ENCODE measurements at regions of chr17 and their contacts with region 1.

Region 1: DNA sequence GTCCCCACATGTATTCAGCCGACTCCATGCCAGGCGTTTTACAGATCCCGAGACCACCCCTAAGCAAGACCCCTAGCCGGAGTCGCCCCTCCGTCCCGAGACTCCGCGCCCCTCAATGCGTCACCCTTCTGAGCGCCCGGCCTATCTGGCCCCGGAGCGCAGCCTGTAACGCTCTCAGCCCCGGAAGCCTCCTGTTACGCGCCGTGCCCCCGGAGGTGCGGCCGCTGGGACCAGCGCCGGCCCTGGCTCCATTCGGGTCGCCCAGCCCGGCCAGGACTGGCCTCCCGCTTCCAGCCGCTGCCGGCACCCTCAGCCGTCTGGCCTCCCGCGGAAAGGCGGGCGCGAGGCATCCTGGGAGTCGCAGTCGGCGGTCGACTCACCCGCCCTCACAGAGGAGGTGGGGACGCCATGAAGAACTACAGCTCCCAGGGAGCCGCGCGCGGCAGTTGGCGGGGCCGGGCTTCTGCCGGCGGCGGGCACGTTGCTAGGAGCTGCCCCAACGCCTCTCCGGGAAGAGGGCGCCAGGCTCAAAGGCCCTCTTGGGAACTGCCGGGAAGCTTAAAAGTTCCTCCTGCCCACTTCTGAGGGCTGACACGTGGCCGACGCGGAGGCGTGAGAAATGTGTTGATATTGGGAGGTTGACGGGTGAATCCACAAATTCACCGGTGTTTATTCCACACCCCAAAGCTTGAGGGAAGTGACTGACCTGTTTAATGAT is at the start of gene FBF1:
- DNase-seq: peak; percentile 97
- total RNA-seq, gene FBF1: 5.2 TPM

Region 2: GRCh38 chr17:75877752-75878173 is 63.1 kb before region 1 on chr17:
- intact Hi-C with region 1: no loop called
- DNase-seq: no peak

Region 3: GRCh38 chr17:75904749-75905521 is 35.9 kb before region 1 on chr17 and contains the start of gene MRPL38:
- intact Hi-C with region 1: loop called (anchors 2 kb)
- DNase-seq: peak; percentile 96
- total RNA-seq, gene MRPL38: 76.3 TPM

Region 4: DNA sequence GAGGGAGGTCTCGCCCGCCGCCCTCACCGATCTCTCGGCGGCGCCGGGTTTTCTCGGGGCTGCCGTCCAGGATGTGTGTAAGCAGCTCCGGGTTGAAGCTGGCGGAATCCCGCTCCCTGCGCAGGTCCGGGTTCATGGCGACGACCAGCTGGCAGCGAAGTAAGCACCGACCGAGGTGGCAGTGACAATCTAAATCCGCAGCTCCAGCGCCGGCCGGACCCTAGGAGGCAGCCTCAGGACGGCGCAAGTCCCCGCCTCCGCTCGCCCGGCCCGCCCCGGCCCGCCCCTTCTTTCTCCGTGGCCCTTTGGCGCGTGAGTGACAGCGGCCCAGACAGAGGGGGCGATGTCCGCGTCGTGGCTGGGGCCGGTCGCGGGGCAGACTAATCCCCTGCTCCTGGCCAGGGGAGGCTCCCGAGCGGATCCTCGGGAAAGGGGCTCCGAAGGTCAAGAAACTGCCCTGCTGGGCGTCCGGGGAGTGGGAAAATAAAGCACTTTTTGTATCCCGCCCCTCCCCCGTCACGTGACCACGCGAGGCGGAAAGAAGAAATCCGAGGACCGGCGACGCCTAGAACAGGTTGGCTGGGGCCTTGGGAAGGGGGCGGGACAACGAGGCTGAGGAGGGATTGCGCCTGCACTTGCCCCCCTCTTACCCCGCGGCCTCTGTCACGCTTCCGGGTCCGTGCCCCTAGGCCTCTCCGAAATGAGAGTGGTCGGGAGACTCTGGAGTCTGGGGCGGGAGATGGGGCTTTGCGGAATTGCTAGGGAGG is 38.2 kb after region 1 on chr17 and contains the starts of genes ACOX1 and TEN1:
- intact Hi-C with region 1: loop called (anchors 2 kb)
- DNase-seq: peak; percentile 99
- total RNA-seq, gene ACOX1: 73.3 TPM
- total RNA-seq, gene TEN1: 9.6 TPM

Measured in cardiac septum (tissue), 1 donor.